Breast epithelium (tissue), 4 donors: ENCODE measurements at regions of chr17 and their contacts with region 1.

Region 1: GRCh38 chr17:41966463-41967140 is at the start of gene CNP:
- DNase-seq: peak; percentile 85 to 89
- H3K4me3 ChIP-seq: peak within 1 kb of the TSS; percentile 92 to 94 (median 92)
- H3K27ac ChIP-seq: peak within 1 kb of the TSS; percentile 90 to 91
- H3K4me1 ChIP-seq: peaks cover 0 to 14% of the 10 kb centered on the region in 2 donors
- H3K27me3 ChIP-seq: no peaks in the 10 kb centered on the region
- CTCF ChIP-seq: no peak
- POLR2A ChIP-seq: no peak
- total RNA-seq, gene CNP: 51.8 to 55.5 (median 53.7) TPM

Region 2: DNA sequence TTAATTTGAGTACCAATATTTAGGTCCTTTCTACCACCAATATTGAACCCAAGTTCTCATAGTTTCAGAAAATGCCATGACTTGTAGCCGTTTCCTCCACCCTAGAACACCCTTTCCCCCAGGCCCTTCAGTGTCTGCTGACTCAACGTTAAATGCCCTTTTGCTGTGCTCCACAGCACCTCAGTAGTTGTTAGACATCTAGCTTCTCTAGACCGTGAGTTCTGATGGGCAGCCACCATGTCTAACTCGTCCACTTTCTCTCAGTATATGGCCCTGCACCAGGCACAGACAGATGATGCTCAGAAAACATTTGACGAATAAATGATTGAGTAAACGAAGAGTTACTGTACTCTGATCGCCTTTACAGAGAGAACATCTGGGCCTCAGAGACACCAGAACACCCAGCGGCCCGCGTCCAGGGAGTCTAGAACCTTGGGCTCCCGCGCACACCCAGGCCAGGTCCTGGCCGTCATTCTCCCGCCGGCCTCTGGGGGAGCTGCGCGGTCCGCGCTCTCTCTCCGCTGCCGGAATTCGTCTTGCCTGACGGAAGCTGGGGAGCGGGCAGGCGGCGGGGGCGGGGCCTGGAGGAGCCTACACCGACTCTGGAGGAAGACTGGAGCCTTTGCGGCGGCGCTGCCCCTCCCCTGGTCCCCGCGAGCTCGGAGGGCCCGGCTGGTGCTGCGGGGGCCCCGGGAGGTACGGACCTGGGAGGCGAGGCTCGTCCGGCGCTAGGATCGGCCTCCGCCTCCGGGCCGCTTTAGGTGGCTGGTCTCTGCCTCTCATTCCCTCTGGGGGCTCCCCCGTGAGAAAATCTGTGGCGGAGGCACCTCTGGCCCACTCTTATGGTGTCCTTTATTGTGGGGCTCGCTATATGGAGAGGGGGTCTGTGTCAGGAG is 53.2 kb after region 1 on chr17 and contains the start of gene NKIRAS2:
- intact Hi-C with region 1: loop called (anchors 10 kb)
- DNase-seq: peak; percentile 90 to 94
- H3K4me3 ChIP-seq: peak within 1 kb of the TSS; percentile 80 to 94 (median 85)
- H3K27ac ChIP-seq: peak within 1 kb of the TSS; percentile 85 to 92
- H3K4me1 ChIP-seq: peaks cover 0 to 15% of the 10 kb centered on the region in 2 donors
- H3K27me3 ChIP-seq: no peaks in the 10 kb centered on the region
- CTCF ChIP-seq: peak; percentile 93 to 98 (median 95)
- POLR2A ChIP-seq: peak; percentile 35
- total RNA-seq, gene NKIRAS2: 21.6 to 33.8 (median 22.5) TPM

Region 3: DNA sequence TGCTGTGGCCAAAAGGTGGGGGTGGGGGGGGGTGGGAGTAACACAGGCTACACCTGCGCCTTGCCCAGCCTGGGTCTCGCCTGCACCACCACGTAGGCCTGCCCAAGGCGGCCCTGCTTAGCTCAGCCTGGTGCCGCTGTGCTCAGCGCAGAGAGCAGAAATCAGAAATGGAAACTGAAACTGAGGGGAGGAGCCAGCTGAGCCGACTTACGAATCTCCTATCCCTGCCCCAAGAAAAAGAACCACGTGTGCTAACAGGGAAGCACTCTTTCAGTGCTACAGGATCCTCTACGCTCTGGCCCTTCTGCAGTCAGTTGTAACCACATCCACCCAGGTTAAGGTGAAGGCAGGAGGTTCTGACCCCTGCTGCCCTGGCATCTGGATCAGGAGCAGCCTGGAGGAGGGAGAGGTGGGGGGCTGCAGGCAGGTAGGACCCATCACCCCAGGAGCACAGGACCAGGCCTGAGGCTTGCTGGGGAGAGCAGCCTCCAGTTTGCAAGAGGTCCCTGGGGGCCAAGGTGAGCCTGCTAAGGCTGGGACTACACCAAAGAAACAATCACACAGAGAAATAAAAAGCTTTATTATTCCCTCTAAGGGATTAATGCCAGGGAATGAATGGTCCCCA is 146.1 kb after region 1 on chr17 and contains the start of gene DHX58:
- intact Hi-C with region 1: loop called (anchors 10 kb)
- DNase-seq: peak in 1 of 2 donors; percentile 73
- H3K4me3 ChIP-seq: peak within 1 kb of the TSS; percentile 57 to 82 (median 66)
- H3K27ac ChIP-seq: peak within 1 kb of the TSS; percentile 91
- H3K4me1 ChIP-seq: peaks cover 6 to 9% of the 10 kb centered on the region in 2 donors
- H3K27me3 ChIP-seq: no peaks in the 10 kb centered on the region
- CTCF ChIP-seq: no peak
- POLR2A ChIP-seq: no peak
- total RNA-seq, gene DHX58: 13.1 to 22.8 (median 13.4) TPM

Region 4: GRCh38 chr17:42779936-42780850 is 813.6 kb after region 1 on chr17 and contains the start of gene WNK4:
- intact Hi-C with region 1: loop called (anchors 5 kb)
- DNase-seq: no peak
- H3K4me3 ChIP-seq: peak within 1 kb of the TSS; percentile 27 to 70 (median 57)
- H3K27ac ChIP-seq: peak within 1 kb of the TSS; percentile 10 to 61
- H3K4me1 ChIP-seq: no peaks in the 10 kb centered on the region
- H3K27me3 ChIP-seq: peaks cover 0 to 27% of the 10 kb centered on the region in 2 donors
- CTCF ChIP-seq: no peak
- POLR2A ChIP-seq: no peak
- total RNA-seq, gene WNK4: 0.16 to 4.1 (median 0.66) TPM